Calu3 (cell line): ENCODE measurements at regions of chr15 and their contacts with region 1.

Region 1: DNA sequence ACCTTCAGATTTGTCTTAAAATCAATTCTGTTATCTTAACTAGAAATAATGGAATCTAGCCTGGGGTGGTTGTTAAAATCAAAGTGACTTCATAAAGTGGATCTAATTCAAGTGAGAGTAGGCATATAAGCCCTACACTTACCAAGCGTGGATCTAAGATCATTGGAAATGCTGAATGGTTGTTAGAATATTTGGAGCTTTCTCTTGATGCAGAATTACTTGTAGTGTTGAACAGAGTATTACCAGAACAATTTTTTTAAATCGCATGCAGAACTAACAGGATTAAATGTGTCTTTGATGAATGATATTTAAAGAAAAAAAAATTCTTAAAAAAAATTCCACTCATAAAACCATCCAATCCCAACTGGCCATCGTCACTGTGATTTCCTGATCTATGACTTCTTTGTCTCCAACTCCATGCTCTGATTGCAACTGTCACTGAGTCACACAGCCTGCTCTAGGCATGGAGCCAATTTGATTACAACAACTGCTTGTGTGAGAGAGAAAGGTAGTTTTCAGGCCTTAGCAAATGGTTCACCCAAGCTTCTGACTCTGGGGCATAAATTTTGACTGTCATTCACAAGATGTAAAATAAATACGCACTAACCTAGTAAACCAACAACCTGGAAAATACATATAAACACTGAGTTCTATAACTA is 25.9 kb upstream of the SPRED1 start:
- DNase-seq: peak; percentile 65
- H3K4me3 Mint-ChIP-seq: no peak overlapping the region
- H3K27ac Mint-ChIP-seq: no peak overlapping the region
- H3K4me1 Mint-ChIP-seq: no peaks in the 10 kb centered on the region
- H3K27me3 Mint-ChIP-seq: no peaks in the 10 kb centered on the region
- CTCF ChIP-seq: no peak

Region 2: GRCh38 chr15:38111070-38111469 is 115.7 kb before region 1 on chr15:
- CTCF ChIA-PET with region 1: no interaction called
- intact Hi-C with region 1: loop called (anchors 10 kb)
- DNase-seq: no peak
- H3K4me3 Mint-ChIP-seq: no peak overlapping the region
- H3K27ac Mint-ChIP-seq: no peak overlapping the region
- H3K4me1 Mint-ChIP-seq: no peaks in the 10 kb centered on the region
- H3K27me3 Mint-ChIP-seq: no peaks in the 10 kb centered on the region
- CTCF ChIP-seq: no peak

Region 3: GRCh38 chr15:38164061-38164460 is 62.7 kb before region 1 on chr15:
- CTCF ChIA-PET with region 1: no interaction called
- intact Hi-C with region 1: no loop called
- DNase-seq: no peak
- H3K4me3 Mint-ChIP-seq: peak overlapping the region; percentile 23
- H3K27ac Mint-ChIP-seq: peak overlapping the region; percentile 10
- H3K4me1 Mint-ChIP-seq: peaks cover 20% of the 10 kb centered on the region
- H3K27me3 Mint-ChIP-seq: no peaks in the 10 kb centered on the region
- CTCF ChIP-seq: no peak